Dendritic cell treated with granulocyte-macrophage colony-stimulating factor and Interleukin-4, amounts not matched to agents 40 ng/mL and 50 ng/mL, for 4 days (primary cell): ENCODE measurements at regions of chr2 and their contacts with region 1.

Region 1: DNA sequence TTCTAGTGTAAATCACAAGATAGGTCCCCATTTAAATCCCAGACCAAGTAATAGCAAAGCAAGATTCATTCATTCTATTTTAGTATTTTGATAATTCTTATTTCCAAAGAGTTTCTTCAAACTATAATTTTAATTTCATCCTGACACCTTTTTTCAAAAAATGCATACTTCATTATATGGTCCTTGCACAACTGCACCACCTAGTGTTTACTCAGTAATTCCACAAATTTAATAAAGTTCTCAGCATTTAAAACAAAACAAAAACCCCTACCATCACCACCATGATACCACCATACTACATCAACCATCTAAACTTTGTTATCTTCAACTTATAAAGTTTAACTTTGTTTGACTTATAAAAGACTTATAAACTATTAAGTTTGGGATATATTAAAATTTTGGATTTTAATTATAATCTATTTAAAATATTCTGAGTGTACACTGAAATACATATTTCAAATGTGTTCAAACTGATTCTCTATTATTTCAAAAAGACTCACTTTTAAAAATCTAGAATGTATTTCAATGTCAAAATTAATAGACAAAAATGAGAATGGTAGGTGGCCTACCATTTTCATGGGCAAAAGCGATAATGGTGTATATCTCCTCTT is 44.2 kb downstream of the WDPCP start:
- H3K4me3 Mint-ChIP-seq: no peak overlapping the region
- H3K27ac Mint-ChIP-seq: no peak overlapping the region
- H3K4me1 Mint-ChIP-seq: no peaks in the 10 kb centered on the region
- H3K27me3 Mint-ChIP-seq: no peaks in the 10 kb centered on the region

Region 2: GRCh38 chr2:62787386-62787785 is 756.7 kb before region 1 on chr2:
- intact Hi-C with region 1: loop called (anchors 5 kb)
- H3K4me3 Mint-ChIP-seq: no peak overlapping the region
- H3K27ac Mint-ChIP-seq: no peak overlapping the region
- H3K4me1 Mint-ChIP-seq: peaks cover 8% of the 10 kb centered on the region
- H3K27me3 Mint-ChIP-seq: no peaks in the 10 kb centered on the region

Region 3: GRCh38 chr2:63588385-63589147 is 44.4 kb after region 1 on chr2 and contains the starts of genes MDH1 and WDPCP:
- intact Hi-C with region 1: loop called (anchors 2 kb)
- H3K4me3 Mint-ChIP-seq: peak within 1 kb of the TSS; percentile 99
- H3K27ac Mint-ChIP-seq: peak within 1 kb of the TSS; percentile 97
- H3K4me1 Mint-ChIP-seq: peaks cover 42% of the 10 kb centered on the region
- H3K27me3 Mint-ChIP-seq: no peaks in the 10 kb centered on the region

Region 4: GRCh38 chr2:63743982-63744966 is 200.2 kb after region 1 on chr2:
- intact Hi-C with region 1: no loop called
- H3K4me3 Mint-ChIP-seq: no peak overlapping the region
- H3K27ac Mint-ChIP-seq: peak overlapping the region; percentile 39
- H3K4me1 Mint-ChIP-seq: peaks cover 7% of the 10 kb centered on the region
- H3K27me3 Mint-ChIP-seq: no peaks in the 10 kb centered on the region